PC-3 (cell line): ENCODE measurements at regions of chr7 and their contacts with region 1.

Region 1: GRCh38 chr7:96548664-96549063 is 161.0 kb downstream of the SEM1 start:
- DNase-seq: peak; percentile 96
- ATAC-seq: peak; percentile 95
- H3K4me3 ChIP-seq: no peak overlapping the region
- H3K27ac ChIP-seq: peak overlapping the region; percentile 77
- H3K4me1 ChIP-seq: peaks cover 30% of the 10 kb centered on the region
- H3K27me3 ChIP-seq: no peaks in the 10 kb centered on the region
- CTCF ChIP-seq: no peak

Region 2: DNA sequence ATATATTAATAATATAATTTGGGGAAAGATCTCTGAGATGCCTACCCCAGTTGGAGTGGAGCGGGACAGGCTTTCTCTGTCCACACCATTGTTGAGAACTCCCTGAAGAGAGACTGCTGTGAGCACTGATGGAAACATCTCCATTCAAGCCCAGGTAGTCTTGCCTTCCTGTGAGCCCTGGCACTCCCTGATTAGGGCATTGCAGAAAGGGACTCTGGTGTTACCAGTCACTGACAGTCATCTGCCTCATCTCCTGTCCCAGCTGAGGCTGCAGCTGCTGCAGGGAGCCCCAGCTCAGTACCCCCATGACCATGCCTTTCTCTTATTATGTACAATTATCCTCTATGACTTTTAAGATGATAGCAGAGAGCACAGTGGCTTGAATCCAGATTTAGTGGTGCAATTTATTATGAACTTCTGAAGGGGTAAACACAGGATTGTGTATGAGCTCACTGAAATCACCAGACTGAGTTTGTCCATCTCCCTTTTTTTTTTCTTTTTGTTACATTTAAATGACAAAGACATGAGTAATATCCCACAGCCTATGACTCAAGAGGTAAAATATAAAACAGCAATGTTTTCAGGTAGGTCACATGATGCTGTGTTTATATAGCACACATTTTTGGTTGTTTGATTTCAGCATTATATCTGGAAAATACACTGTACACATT is 463.6 kb before region 1 on chr7:
- CTCF ChIA-PET with region 1: no interaction called
- POLR2A ChIA-PET with region 1: no interaction called
- intact Hi-C with region 1: loop called (anchors 5 kb)
- DNase-seq: peak; percentile 88
- ATAC-seq: peak; percentile 72
- H3K4me3 ChIP-seq: no peak overlapping the region
- H3K27ac ChIP-seq: peak overlapping the region; percentile 59
- H3K4me1 ChIP-seq: peaks cover 42% of the 10 kb centered on the region
- H3K27me3 ChIP-seq: no peaks in the 10 kb centered on the region
- CTCF ChIP-seq: no peak

Region 3: GRCh38 chr7:96449094-96449493 is 99.6 kb before region 1 on chr7:
- CTCF ChIA-PET with region 1: no interaction called
- POLR2A ChIA-PET with region 1: no interaction called
- intact Hi-C with region 1: no loop called
- DNase-seq: no peak
- ATAC-seq: no peak
- H3K4me3 ChIP-seq: no peak overlapping the region
- H3K27ac ChIP-seq: no peak overlapping the region
- H3K4me1 ChIP-seq: no peaks in the 10 kb centered on the region
- H3K27me3 ChIP-seq: peaks cover 15% of the 10 kb centered on the region; the same call in 1 of the 2 replicates
- CTCF ChIP-seq: no peak

Region 4: GRCh38 chr7:96521068-96521894 is 27.4 kb before region 1 on chr7:
- CTCF ChIA-PET with region 1: no interaction called
- POLR2A ChIA-PET with region 1: no interaction called
- intact Hi-C with region 1: no loop called
- DNase-seq: no peak
- ATAC-seq: no peak
- H3K4me3 ChIP-seq: no peak overlapping the region
- H3K27ac ChIP-seq: no peak overlapping the region
- H3K4me1 ChIP-seq: no peaks in the 10 kb centered on the region
- H3K27me3 ChIP-seq: peaks cover 6% of the 10 kb centered on the region
- CTCF ChIP-seq: no peak

Region 5: GRCh38 chr7:96596120-96596826 is 47.6 kb after region 1 on chr7:
- CTCF ChIA-PET with region 1: no interaction called
- POLR2A ChIA-PET with region 1: no interaction called
- intact Hi-C with region 1: loop called (anchors 5 kb)
- DNase-seq: peak; percentile 32
- ATAC-seq: peak; percentile 66
- H3K4me3 ChIP-seq: no peak overlapping the region
- H3K27ac ChIP-seq: no peak overlapping the region
- H3K4me1 ChIP-seq: no peaks in the 10 kb centered on the region
- H3K27me3 ChIP-seq: no peaks in the 10 kb centered on the region
- CTCF ChIP-seq: peak; percentile 47

Region 6: DNA sequence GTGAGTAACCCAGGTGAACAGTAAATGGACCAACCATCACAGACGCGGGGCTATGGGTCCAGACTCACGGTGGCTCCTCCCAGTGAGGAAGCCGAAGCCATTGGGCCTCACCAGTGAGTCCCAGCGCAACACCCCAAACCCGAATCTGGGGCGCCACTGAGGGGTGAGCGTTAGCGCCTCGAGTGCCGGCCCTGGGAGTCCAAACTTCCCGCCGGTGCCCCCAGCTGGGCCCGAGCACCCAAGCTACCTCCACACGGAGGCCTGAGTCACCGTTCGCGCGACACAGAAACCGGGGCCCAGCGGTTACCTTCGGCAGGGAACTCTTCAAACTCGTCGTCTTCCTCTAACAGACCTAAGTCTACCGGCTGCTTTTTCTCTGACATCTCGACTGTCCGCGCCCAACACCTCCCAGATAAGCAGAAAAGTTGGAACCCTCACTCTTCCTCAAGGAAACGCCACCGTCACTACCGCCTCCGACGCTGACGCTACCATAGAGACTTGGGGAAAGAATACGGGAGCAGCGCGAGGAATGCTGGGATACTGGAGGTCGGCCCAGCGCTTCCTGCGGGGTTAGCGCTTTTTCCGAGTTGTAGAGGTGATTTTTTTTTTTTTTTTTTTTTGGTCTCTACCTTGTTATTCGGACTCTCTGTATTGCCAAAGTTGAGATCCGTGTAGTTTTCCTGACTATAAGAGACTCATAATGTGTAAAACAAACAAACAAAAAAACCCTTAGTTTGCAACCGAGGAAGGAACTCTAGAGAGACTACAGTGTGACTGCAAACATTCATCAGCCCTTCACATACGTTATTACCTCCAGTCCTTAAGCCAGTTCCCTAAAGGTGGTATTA is 160.9 kb after region 1 on chr7 and contains the start of gene SEM1:
- CTCF ChIA-PET with region 1: no interaction called
- POLR2A ChIA-PET with region 1: no interaction called
- intact Hi-C with region 1: loop called (anchors 5 kb)
- DNase-seq: peak; percentile 81
- ATAC-seq: peak; percentile 96
- H3K4me3 ChIP-seq: peak within 1 kb of the TSS; percentile 92
- H3K27ac ChIP-seq: peak within 1 kb of the TSS; percentile 74
- H3K4me1 ChIP-seq: peaks cover 17% of the 10 kb centered on the region
- H3K27me3 ChIP-seq: no peaks in the 10 kb centered on the region
- CTCF ChIP-seq: no peak
- total RNA-seq, gene SEM1: 263 and 292 TPM in 2 replicates